H1 (cell line): ENCODE measurements at regions of chr6 and their contacts with region 1.

Region 1: DNA sequence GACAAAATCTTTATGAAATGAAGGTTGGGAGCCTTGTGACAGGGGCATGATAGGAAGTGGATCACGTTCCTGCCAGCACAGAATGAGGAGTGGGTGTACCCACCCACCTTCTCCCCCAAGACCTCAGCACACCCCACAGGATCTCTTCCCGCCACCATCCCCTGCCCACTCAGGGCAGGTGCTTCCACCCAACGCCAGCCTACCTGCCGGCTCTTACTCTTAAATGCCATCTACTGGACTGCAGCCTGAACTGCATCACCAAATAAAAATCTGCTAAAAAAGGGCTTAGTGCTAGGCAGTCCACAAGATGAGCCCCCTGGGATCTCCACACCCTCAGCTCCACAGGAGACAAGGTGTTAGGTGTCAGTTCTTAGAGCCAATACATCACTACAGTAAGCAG is 20.6 kb downstream of the DTNBP1 start:
- DNase-seq: peak in 1 of 2 experiments; percentile 67
- H3K4me3 ChIP-seq: no peak overlapping the region
- H3K27ac ChIP-seq: no peak overlapping the region
- H3K4me1 ChIP-seq: no peaks in the 10 kb centered on the region
- H3K27me3 ChIP-seq: no peaks in the 10 kb centered on the region; a peak in 1 of 7 replicates
- CTCF ChIP-seq: peak; percentile 49 to 69 (median 68)
- EP300 ChIP-seq: no peak
- POLR2A ChIP-seq: no peak
- RAD21 ChIP-seq: peak; percentile 57 to 72

Region 2: GRCh38 chr6:15526212-15526701 is 116.0 kb before region 1 on chr6:
- CTCF ChIA-PET with region 1: no interaction called
- POLR2A ChIA-PET with region 1: no interaction called
- DNase-seq: peak in 1 of 2 experiments; percentile 44
- H3K4me3 ChIP-seq: no peak overlapping the region
- H3K27ac ChIP-seq: no peak overlapping the region
- H3K4me1 ChIP-seq: no peaks in the 10 kb centered on the region
- H3K27me3 ChIP-seq: no peaks in the 10 kb centered on the region
- CTCF ChIP-seq: no peak
- EP300 ChIP-seq: no peak
- POLR2A ChIP-seq: peak; percentile 6 to 55; a peak in 2 of 3 replicates
- RAD21 ChIP-seq: no peak

Region 3: DNA sequence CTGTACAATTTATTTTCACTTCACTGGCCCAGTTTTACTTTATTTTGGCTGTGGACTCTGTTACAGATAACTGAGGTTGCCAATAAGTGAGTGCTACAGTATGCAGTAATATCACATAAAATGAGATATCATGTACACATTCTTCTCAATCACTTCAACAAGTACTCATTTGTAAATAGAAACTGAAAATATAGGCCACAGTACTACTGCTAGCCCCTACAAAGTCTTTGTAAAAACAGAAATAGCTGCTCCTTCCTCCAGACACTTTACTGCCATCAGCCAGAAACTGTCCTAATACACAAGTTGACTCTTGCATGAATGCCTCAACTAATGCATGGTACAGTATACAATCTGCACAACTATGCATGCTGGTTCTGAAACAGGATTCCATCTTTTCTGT is 11.3 kb after region 1 on chr6:
- CTCF ChIA-PET with region 1: interaction called, 25 read pairs
- POLR2A ChIA-PET with region 1: no interaction called
- DNase-seq: no peak
- H3K4me3 ChIP-seq: no peak overlapping the region
- H3K27ac ChIP-seq: no peak overlapping the region
- H3K4me1 ChIP-seq: peaks cover 0 to 5% (median 2%) of the 10 kb centered on the region in 4 experiments; a peak in 3 of 7 replicates
- H3K27me3 ChIP-seq: no peaks in the 10 kb centered on the region
- CTCF ChIP-seq: no peak
- EP300 ChIP-seq: no peak
- POLR2A ChIP-seq: no peak
- RAD21 ChIP-seq: no peak